ENCODE measurements at regions of chr6 and their contacts with region 1.

Region 1: GRCh38 chr6:144582939-144583613 is 297.9 kb downstream of the UTRN start:
- DNase-seq: peak in 8 of 9 donors; percentile 43 to 77 (median 68)
- ATAC-seq: peak; percentile 86
- H3K4me3 ChIP-seq: peak overlapping the region; percentile 33
- H3K4me3 Mint-ChIP-seq: peak overlapping the region; percentile 70 to 91 (median 86)
- H3K27ac ChIP-seq: peak overlapping the region; percentile 41
- H3K27ac Mint-ChIP-seq: peak overlapping the region; percentile 5 to 93 (median 82)
- H3K4me1 ChIP-seq: peaks cover 19 to 20% of the 10 kb centered on the region in 2 donors
- H3K4me1 Mint-ChIP-seq: peaks cover 14 to 62% (median 32%) of the 10 kb centered on the region in 7 donors
- H3K27me3 ChIP-seq: no peaks in the 10 kb centered on the region
- H3K27me3 Mint-ChIP-seq: no peaks in the 10 kb centered on the region

Region 2: GRCh38 chr6:144149891-144150709 is 433.0 kb before region 1 on chr6 and contains the start of gene STX11:
- CTCF ChIA-PET with region 1: no interaction called
- POLR2A ChIA-PET with region 1: no interaction called
- intact Hi-C with region 1: loop called in 1 of 2 experiments (anchors 5 kb)
- DNase-seq: peak; percentile 37 to 88 (median 51)
- ATAC-seq: peak; percentile 86
- H3K4me3 ChIP-seq: peak within 1 kb of the TSS; percentile 69
- H3K4me3 Mint-ChIP-seq: peak within 1 kb of the TSS; percentile 91 to 98 (median 95)
- H3K27ac ChIP-seq: peak within 1 kb of the TSS; percentile 62
- H3K27ac Mint-ChIP-seq: peak within 1 kb of the TSS; percentile 89 to 98 (median 94)
- H3K4me1 ChIP-seq: peaks cover 0 to 17% of the 10 kb centered on the region in 2 donors
- H3K4me1 Mint-ChIP-seq: peaks cover 6 to 43% (median 15%) of the 10 kb centered on the region in 7 donors
- H3K27me3 ChIP-seq: no peaks in the 10 kb centered on the region
- H3K27me3 Mint-ChIP-seq: peaks cover 0 to 2% (median 0%) of the 10 kb centered on the region in 5 donors
- total RNA-seq, gene STX11: 2.6 to 60.5 (median 11.6) TPM

Region 3: GRCh38 chr6:144559865-144560593 is 23.0 kb before region 1 on chr6:
- CTCF ChIA-PET with region 1: interaction called, 4 read pairs
- POLR2A ChIA-PET with region 1: no interaction called
- intact Hi-C with region 1: loop called in 1 of 2 experiments (anchors 1 kb)
- DNase-seq: peak in 8 of 9 donors; percentile 35 to 72 (median 53)
- ATAC-seq: peak; percentile 94
- H3K4me3 ChIP-seq: peak overlapping the region; percentile 17
- H3K4me3 Mint-ChIP-seq: peak overlapping the region; percentile 74 to 87 (median 78)
- H3K27ac ChIP-seq: peak overlapping the region; percentile 65
- H3K27ac Mint-ChIP-seq: peak overlapping the region; percentile 80 to 95 (median 89)
- H3K4me1 ChIP-seq: no peaks in the 10 kb centered on the region
- H3K4me1 Mint-ChIP-seq: peaks cover 11 to 37% (median 27%) of the 10 kb centered on the region in 7 donors
- H3K27me3 ChIP-seq: no peaks in the 10 kb centered on the region
- H3K27me3 Mint-ChIP-seq: no peaks in the 10 kb centered on the region

Region 4: DNA sequence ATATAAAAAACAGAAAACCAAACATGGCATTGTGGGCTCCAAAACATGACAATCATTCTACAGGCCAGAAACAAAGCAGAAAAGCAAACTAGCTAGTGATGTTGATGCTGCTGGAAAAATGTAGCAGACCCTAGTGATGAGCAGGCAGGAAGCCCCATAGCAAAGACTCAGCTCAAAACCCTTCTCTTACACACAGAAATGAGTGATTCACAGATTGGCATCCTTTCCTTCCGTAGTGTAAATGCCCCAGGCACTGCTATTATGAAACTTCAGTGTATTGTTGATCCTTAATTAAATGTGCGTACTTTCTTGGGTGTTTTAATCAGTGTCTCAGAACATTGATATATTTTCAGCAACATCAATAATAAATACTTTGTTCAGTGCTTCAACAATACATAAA is 127.2 kb after region 1 on chr6:
- CTCF ChIA-PET with region 1: no interaction called
- POLR2A ChIA-PET with region 1: no interaction called
- intact Hi-C with region 1: loop called in 1 of 2 experiments (anchors 5 kb)
- DNase-seq: no peak
- ATAC-seq: no peak
- H3K4me3 ChIP-seq: no peak overlapping the region
- H3K4me3 Mint-ChIP-seq: no peak overlapping the region
- H3K27ac ChIP-seq: no peak overlapping the region
- H3K27ac Mint-ChIP-seq: no peak overlapping the region
- H3K4me1 ChIP-seq: no peaks in the 10 kb centered on the region
- H3K4me1 Mint-ChIP-seq: peaks cover 0 to 17% (median 4%) of the 10 kb centered on the region in 7 donors
- H3K27me3 ChIP-seq: no peaks in the 10 kb centered on the region
- H3K27me3 Mint-ChIP-seq: no peaks in the 10 kb centered on the region

Region 5: GRCh38 chr6:144820270-144820669 is 237.2 kb after region 1 on chr6:
- CTCF ChIA-PET with region 1: no interaction called
- POLR2A ChIA-PET with region 1: no interaction called
- intact Hi-C with region 1: loop called in 1 of 2 experiments (anchors 10 kb)
- DNase-seq: no peak
- ATAC-seq: no peak
- H3K4me3 ChIP-seq: no peak overlapping the region
- H3K4me3 Mint-ChIP-seq: no peak overlapping the region
- H3K27ac ChIP-seq: no peak overlapping the region
- H3K27ac Mint-ChIP-seq: no peak overlapping the region
- H3K4me1 ChIP-seq: peaks cover 0 to 4% of the 10 kb centered on the region in 2 donors
- H3K4me1 Mint-ChIP-seq: peaks cover 0 to 5% (median 0%) of the 10 kb centered on the region in 7 donors
- H3K27me3 ChIP-seq: no peaks in the 10 kb centered on the region
- H3K27me3 Mint-ChIP-seq: no peaks in the 10 kb centered on the region

Region 6: GRCh38 chr6:145199961-145200360 is 616.9 kb after region 1 on chr6:
- CTCF ChIA-PET with region 1: no interaction called
- POLR2A ChIA-PET with region 1: no interaction called
- intact Hi-C with region 1: no loop called
- DNase-seq: no peak
- ATAC-seq: no peak
- H3K4me3 ChIP-seq: no peak overlapping the region
- H3K4me3 Mint-ChIP-seq: no peak overlapping the region
- H3K27ac ChIP-seq: no peak overlapping the region
- H3K27ac Mint-ChIP-seq: no peak overlapping the region
- H3K4me1 ChIP-seq: no peaks in the 10 kb centered on the region
- H3K4me1 Mint-ChIP-seq: no peaks in the 10 kb centered on the region
- H3K27me3 ChIP-seq: no peaks in the 10 kb centered on the region
- H3K27me3 Mint-ChIP-seq: peaks cover 9 to 26% (median 14%) of the 10 kb centered on the region in 5 donors

Region 7: DNA sequence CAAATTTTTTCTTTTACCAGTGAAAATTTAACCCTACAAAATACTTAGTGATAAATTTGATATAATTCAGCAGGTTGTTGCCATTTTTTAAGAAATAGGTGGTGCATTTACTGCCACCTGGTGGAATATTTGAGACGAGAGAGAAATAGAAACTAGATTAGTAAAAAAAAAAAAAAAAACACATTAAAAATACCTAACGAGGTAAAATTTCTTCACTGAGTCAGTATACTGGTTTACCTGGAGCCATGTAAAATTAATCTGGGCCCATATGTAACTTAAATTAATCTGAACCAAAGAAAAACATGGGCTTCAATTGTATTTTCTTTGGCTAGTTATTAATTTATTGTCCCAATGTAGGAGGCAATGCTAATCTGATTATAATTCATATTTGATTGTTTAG is 631.5 kb after region 1 on chr6:
- CTCF ChIA-PET with region 1: no interaction called
- POLR2A ChIA-PET with region 1: no interaction called
- intact Hi-C with region 1: loop called (anchors 1 kb)
- DNase-seq: peak in 3 of 9 donors; percentile 5 to 27 (median 14)
- ATAC-seq: no peak
- H3K4me3 ChIP-seq: no peak overlapping the region
- H3K4me3 Mint-ChIP-seq: no peak overlapping the region
- H3K27ac ChIP-seq: no peak overlapping the region
- H3K27ac Mint-ChIP-seq: no peak overlapping the region
- H3K4me1 ChIP-seq: no peaks in the 10 kb centered on the region
- H3K4me1 Mint-ChIP-seq: peaks cover 0 to 7% (median 0%) of the 10 kb centered on the region in 7 donors
- H3K27me3 ChIP-seq: no peaks in the 10 kb centered on the region
- H3K27me3 Mint-ChIP-seq: peaks cover 0 to 11% (median 8%) of the 10 kb centered on the region in 5 donors

Region 8: GRCh38 chr6:145814501-145815308 is 1231.6 kb after region 1 on chr6 and contains the start of gene FBXO30:
- CTCF ChIA-PET with region 1: no interaction called
- POLR2A ChIA-PET with region 1: no interaction called
- intact Hi-C with region 1: loop called in 1 of 2 experiments (anchors 10 kb)
- DNase-seq: peak; percentile 81 to 94 (median 88)
- ATAC-seq: peak; percentile 98
- H3K4me3 ChIP-seq: peak within 1 kb of the TSS; percentile 92
- H3K4me3 Mint-ChIP-seq: peak within 1 kb of the TSS; percentile 91 to 96 (median 94)
- H3K27ac ChIP-seq: peak within 1 kb of the TSS; percentile 80
- H3K27ac Mint-ChIP-seq: peak within 1 kb of the TSS; percentile 83 to 96 (median 95)
- H3K4me1 ChIP-seq: peaks cover 0 to 18% of the 10 kb centered on the region in 2 donors
- H3K4me1 Mint-ChIP-seq: peaks cover 25 to 50% (median 41%) of the 10 kb centered on the region in 7 donors
- H3K27me3 ChIP-seq: no peaks in the 10 kb centered on the region
- H3K27me3 Mint-ChIP-seq: peaks cover 0 to 3% (median 0%) of the 10 kb centered on the region in 5 donors
- total RNA-seq, gene FBXO30: 1.6 to 5.1 (median 4.8) TPM

Measured in naive thymus-derived CD4-positive, alpha-beta T cell (primary cell).